CD8-positive, alpha-beta T cell (primary cell): ENCODE measurements at regions of chr14 and their contacts with region 1.

Region 1: GRCh38 chr14:22474730-22475351 is 114.2 kb downstream of the DAD1 start:
- DNase-seq: no peak
- ATAC-seq: no peak
- H3K4me3 ChIP-seq: no peak overlapping the region
- H3K4me3 Mint-ChIP-seq: no peak overlapping the region
- H3K27ac ChIP-seq: peak overlapping the region in 1 of 2 experiments; percentile 54
- H3K27ac Mint-ChIP-seq: no peak overlapping the region
- H3K4me1 ChIP-seq: no peaks in the 10 kb centered on the region
- H3K4me1 Mint-ChIP-seq: no peaks in the 10 kb centered on the region
- H3K27me3 ChIP-seq: no peaks in the 10 kb centered on the region
- H3K27me3 Mint-ChIP-seq: no peaks in the 10 kb centered on the region
- CTCF ChIP-seq: no peak

Region 2: GRCh38 chr14:22375321-22375930 is 99.4 kb before region 1 on chr14:
- CTCF ChIA-PET with region 1: no interaction called
- POLR2A ChIA-PET with region 1: no interaction called
- intact Hi-C with region 1: no loop called
- DNase-seq: peak in 2 of 9 experiments; percentile 12 to 20
- ATAC-seq: no peak
- H3K4me3 ChIP-seq: no peak overlapping the region
- H3K4me3 Mint-ChIP-seq: no peak overlapping the region
- H3K27ac ChIP-seq: no peak overlapping the region
- H3K27ac Mint-ChIP-seq: no peak overlapping the region
- H3K4me1 ChIP-seq: no peaks in the 10 kb centered on the region
- H3K4me1 Mint-ChIP-seq: no peaks in the 10 kb centered on the region
- H3K27me3 ChIP-seq: no peaks in the 10 kb centered on the region
- H3K27me3 Mint-ChIP-seq: no peaks in the 10 kb centered on the region
- CTCF ChIP-seq: no peak

Region 3: DNA sequence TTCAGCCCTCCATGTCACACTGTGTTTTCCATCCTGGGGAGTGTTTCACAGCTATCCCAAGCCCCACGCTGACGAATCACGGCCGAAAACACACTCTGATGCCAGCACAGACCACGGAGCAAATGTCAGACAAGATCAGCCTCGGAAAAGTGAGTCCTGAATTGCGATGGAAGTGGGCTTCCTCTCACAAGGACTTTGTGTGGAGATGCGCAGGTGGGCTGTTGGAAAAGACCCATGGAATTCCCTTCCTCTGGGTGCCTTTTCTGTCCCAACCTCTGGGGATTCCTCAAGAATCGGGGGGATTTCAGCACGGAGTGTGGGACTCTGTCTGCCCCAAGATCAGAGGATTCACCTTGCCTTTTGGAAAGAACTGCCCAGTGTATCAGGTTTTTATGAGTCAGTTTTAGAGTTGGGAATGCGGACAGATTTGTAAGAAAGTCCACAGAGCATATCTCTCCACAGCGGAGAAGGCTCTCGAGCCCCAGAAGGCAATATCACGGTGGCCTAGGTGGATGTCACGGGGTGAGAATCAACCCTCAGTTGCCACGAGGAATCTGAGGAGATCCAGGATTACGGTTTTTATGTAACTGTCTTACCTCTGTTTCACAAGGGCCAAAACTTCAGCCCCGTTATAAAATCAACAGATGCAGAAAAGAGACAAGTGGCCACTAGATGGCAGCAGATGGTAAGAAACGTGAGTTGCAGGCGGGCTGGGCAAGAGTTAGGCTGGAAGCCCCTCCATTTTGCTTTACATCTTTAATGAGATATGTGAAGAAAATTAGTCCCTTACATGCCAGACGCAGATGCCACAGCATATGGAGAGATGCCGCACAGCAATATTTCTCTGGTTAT is 87.7 kb before region 1 on chr14:
- CTCF ChIA-PET with region 1: no interaction called
- POLR2A ChIA-PET with region 1: no interaction called
- intact Hi-C with region 1: loop called (anchors 1 to 2 kb)
- DNase-seq: peak in 6 of 9 experiments; percentile 0 to 61 (median 22)
- ATAC-seq: no peak
- H3K4me3 ChIP-seq: no peak overlapping the region
- H3K4me3 Mint-ChIP-seq: no peak overlapping the region
- H3K27ac ChIP-seq: no peak overlapping the region
- H3K27ac Mint-ChIP-seq: no peak overlapping the region
- H3K4me1 ChIP-seq: no peaks in the 10 kb centered on the region
- H3K4me1 Mint-ChIP-seq: no peaks in the 10 kb centered on the region
- H3K27me3 ChIP-seq: no peaks in the 10 kb centered on the region
- H3K27me3 Mint-ChIP-seq: no peaks in the 10 kb centered on the region
- CTCF ChIP-seq: no peak